GM10248 (cell line): ENCODE measurements at regions of chr22 and their contacts with region 1.

Region 1: GRCh38 chr22:33920927-33921524 is 750 bp upstream of the LARGE1 start:
- DNase-seq: peak; percentile 90
- CTCF ChIP-seq: no peak

Region 2: DNA sequence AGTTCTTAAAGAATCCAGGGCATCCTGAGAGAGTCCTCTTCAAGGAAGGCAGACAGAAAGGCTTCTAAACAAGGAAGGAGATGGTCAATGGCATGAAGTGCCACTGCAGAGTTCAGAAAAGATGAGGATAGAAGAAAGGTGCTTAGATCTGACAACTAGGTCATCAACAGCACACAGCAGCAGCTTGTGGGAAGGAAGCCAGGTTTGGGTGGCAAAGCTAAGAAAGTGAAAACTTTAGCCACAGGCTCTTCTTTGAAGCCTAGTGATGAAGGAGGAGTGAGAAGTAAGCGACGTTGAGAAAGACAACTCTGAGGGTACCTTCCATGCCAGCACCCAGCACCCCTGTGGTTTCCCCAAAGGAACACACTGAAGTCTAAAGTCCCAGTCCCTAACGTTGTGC is 92.7 kb before region 1 on chr22:
- CTCF ChIA-PET with region 1: no interaction called
- POLR2A ChIA-PET with region 1: no interaction called
- DNase-seq: no peak
- CTCF ChIP-seq: no peak

Region 3: DNA sequence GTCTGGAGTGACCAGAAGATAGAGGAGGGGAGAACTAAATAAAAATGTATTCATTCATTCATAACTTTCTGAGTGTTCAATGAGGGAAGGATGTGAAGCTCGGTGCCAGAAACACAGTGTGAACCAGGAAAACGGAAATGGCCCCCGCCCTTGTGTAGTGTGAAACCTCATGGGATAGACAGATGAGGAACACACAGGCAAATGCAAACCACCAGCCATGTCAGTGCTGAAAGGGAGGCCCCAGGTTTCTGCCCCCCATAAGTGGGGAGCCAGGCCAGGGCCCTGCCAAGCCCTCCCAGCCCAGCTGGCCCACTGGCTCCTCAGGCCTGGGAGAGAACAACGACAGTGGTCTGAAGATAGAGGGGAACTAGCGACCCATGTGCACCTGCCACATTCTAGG is 31.3 kb before region 1 on chr22:
- CTCF ChIA-PET with region 1: interaction called, 10 read pairs
- POLR2A ChIA-PET with region 1: no interaction called
- DNase-seq: no peak
- CTCF ChIP-seq: no peak

Region 4: DNA sequence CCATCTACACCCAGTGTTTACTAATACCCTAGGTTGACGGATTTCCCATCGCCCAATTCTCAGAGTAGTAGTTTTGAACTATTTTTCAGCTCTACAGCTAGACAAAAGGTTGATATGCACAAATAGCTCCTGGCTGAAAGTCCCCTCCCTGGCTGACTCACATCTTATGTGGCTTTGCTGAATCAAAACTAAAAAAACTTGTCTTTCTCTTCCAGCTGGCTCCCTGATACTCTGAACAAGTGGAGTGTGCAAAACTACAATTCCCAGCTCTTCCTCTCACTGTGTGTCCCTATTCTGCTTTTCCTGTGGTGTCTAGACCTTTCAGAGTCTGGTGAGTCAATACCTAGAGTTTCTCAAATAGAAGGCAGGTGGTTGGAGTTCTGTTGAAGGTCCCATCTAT is 12.0 kb after region 1 on chr22:
- CTCF ChIA-PET with region 1: interaction called, 11 read pairs
- POLR2A ChIA-PET with region 1: no interaction called
- DNase-seq: no peak
- CTCF ChIP-seq: no peak

Region 5: GRCh38 chr22:34064696-34065095 is 143.7 kb after region 1 on chr22:
- CTCF ChIA-PET with region 1: no interaction called
- POLR2A ChIA-PET with region 1: no interaction called
- DNase-seq: no peak
- CTCF ChIP-seq: no peak

Region 6: GRCh38 chr22:34105461-34106062 is 184.5 kb after region 1 on chr22:
- CTCF ChIA-PET with region 1: interaction called, 47 read pairs
- POLR2A ChIA-PET with region 1: no interaction called
- DNase-seq: peak; percentile 15
- CTCF ChIP-seq: peak; percentile 68

Region 7: DNA sequence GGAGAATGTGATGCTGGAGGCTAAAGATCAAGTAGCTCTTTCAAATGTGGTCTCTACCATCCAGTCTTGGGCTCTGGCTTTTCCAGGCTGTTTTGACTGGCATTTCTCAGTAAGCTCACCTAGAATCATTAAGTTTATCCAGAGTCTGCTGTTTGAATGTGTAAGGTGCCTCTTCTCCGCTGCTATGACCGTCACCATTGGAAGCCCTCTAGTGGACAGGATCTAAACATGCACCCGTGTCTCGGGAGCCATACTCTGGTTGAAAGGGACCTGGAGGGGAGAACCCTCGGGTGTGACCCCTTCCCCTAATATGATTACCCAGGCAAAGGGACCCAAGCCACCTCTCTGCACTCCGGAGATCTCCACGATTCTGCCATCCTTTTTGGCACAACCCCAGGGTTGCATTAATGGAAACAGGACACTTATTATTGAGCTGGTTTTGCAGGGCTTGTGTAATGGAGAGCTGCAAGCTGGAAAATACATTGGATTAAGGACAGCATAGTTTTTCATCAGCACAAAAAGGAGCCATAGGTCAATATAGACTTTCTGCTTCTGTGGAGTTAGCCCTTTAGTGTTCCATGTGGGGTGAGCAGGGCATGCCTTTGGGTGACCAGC is 190.3 kb after region 1 on chr22:
- CTCF ChIA-PET with region 1: interaction called, 47 read pairs
- POLR2A ChIA-PET with region 1: no interaction called
- DNase-seq: peak; percentile 36
- CTCF ChIP-seq: peak; percentile 86